CD4-positive, alpha-beta T cell (primary cell): ENCODE measurements at regions of chr20 and their contacts with region 1.

Region 1: GRCh38 chr20:43975096-43975768 is 60.6 kb downstream of the TOX2 start:
- DNase-seq: no peak
- ATAC-seq: no peak
- H3K4me3 ChIP-seq: no peak overlapping the region
- H3K4me3 Mint-ChIP-seq: no peak overlapping the region
- H3K27ac ChIP-seq: no peak overlapping the region
- H3K27ac Mint-ChIP-seq: no peak overlapping the region
- H3K4me1 ChIP-seq: no peaks in the 10 kb centered on the region
- H3K4me1 Mint-ChIP-seq: peaks cover 4% of the 10 kb centered on the region
- H3K27me3 ChIP-seq: peaks cover 0 to 2% of the 10 kb centered on the region in 2 experiments
- H3K27me3 Mint-ChIP-seq: no peaks in the 10 kb centered on the region
- CTCF ChIP-seq: no peak

Region 2: GRCh38 chr20:44018259-44018941 is 43.2 kb after region 1 on chr20:
- CTCF ChIA-PET with region 1: no interaction called
- POLR2A ChIA-PET with region 1: no interaction called
- intact Hi-C with region 1: loop called in 1 of 2 experiments (anchors 5 kb)
- DNase-seq: no peak
- ATAC-seq: no peak
- H3K4me3 ChIP-seq: no peak overlapping the region
- H3K4me3 Mint-ChIP-seq: no peak overlapping the region
- H3K27ac ChIP-seq: no peak overlapping the region
- H3K27ac Mint-ChIP-seq: no peak overlapping the region
- H3K4me1 ChIP-seq: peaks cover 32% of the 10 kb centered on the region
- H3K4me1 Mint-ChIP-seq: peaks cover 62% of the 10 kb centered on the region
- H3K27me3 ChIP-seq: peaks cover 0 to 3% of the 10 kb centered on the region in 2 experiments
- H3K27me3 Mint-ChIP-seq: no peaks in the 10 kb centered on the region
- CTCF ChIP-seq: no peak